ENCODE measurements at regions of chr1 and their contacts with region 1.

Region 1: DNA sequence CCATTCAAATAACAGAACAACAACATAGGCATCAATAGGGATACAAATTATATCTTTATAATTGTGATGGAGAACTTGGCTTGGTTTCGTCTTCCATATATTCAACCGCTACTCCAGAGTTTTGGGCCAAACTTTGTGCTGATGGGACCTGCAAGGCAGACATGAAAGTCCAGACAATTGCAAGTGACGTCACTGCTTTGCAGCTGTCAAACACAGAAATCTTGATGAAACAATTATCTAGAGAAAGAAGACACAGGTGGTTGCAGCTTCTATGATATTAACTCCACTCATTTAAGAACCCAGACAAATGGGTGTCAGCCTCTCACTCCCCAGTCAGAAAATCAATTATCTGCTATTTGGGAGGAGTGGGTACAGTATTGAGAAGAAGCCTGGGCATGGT is 390.6 kb downstream of the NUF2 start:
- DNase-seq: no peak
- H3K4me3 Mint-ChIP-seq: no peak overlapping the region
- H3K27ac Mint-ChIP-seq: no peak overlapping the region
- H3K4me1 Mint-ChIP-seq: no peaks in the 10 kb centered on the region
- H3K27me3 Mint-ChIP-seq: no peaks in the 10 kb centered on the region

Region 2: DNA sequence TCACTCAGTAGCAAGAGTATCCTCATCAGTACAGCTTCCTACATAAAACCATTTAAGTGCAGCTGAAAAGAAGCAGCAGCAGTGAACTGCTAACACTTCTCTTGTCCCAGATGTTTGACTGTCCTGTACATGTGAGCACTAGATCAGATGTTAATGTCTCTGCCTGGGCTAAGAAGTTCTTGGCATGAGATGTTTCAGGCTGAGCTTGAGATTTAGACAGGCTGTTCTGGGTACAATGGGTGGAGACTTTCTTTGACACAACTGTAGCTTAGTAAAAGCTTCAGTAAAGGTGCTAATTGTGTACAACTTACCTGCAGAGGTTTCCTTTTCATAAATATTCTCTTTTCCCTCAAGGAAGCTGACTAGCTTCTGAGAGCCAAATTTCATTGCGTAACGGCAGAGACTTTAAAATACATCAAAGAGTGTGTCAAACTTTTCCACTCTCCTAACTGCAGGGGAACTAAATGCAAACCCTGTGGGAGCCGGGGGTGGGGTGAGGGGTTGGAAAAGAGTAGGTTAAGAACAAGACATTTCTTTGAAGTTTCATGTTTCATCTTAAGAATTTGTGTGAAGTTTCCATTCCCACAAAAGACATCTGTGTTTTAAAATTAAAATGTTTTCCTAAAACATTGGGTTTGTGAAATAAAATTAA is 769.3 kb before region 1 on chr1:
- intact Hi-C with region 1: no loop called
- DNase-seq: no peak
- H3K4me3 Mint-ChIP-seq: no peak overlapping the region
- H3K27ac Mint-ChIP-seq: no peak overlapping the region
- H3K4me1 Mint-ChIP-seq: peaks cover 3% of the 10 kb centered on the region
- H3K27me3 Mint-ChIP-seq: peaks cover 11% of the 10 kb centered on the region

Region 3: DNA sequence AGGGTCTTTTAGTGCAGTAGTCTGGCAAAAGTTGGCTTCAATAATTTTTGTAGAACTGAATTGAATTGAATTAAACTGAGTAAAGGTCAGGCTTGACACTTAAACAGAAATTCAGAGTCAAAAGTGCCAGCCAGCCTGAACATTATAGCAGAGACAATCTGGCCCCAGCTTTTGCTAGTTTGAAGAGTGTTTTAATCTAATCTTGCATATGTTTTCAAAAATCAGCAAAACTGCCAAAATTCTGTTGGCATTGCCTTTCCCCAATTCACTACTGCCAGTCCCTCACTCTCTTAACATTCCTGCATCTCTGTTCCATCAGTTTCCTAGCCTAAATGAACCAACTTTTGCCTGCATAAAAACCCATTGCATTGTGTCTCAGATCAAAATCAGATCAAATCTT is 13.2 kb after region 1 on chr1:
- intact Hi-C with region 1: no loop called
- DNase-seq: no peak
- H3K4me3 Mint-ChIP-seq: no peak overlapping the region
- H3K27ac Mint-ChIP-seq: no peak overlapping the region
- H3K4me1 Mint-ChIP-seq: no peaks in the 10 kb centered on the region
- H3K27me3 Mint-ChIP-seq: no peaks in the 10 kb centered on the region

Region 4: GRCh38 chr1:163747261-163747660 is 34.9 kb after region 1 on chr1:
- intact Hi-C with region 1: loop called (anchors 1 kb)
- DNase-seq: no peak
- H3K4me3 Mint-ChIP-seq: no peak overlapping the region
- H3K27ac Mint-ChIP-seq: no peak overlapping the region
- H3K4me1 Mint-ChIP-seq: no peaks in the 10 kb centered on the region
- H3K27me3 Mint-ChIP-seq: no peaks in the 10 kb centered on the region

Region 5: GRCh38 chr1:163758977-163759670 is 46.8 kb after region 1 on chr1:
- intact Hi-C with region 1: no loop called
- DNase-seq: no peak
- H3K4me3 Mint-ChIP-seq: no peak overlapping the region
- H3K27ac Mint-ChIP-seq: no peak overlapping the region
- H3K4me1 Mint-ChIP-seq: no peaks in the 10 kb centered on the region
- H3K27me3 Mint-ChIP-seq: no peaks in the 10 kb centered on the region

Region 6: GRCh38 chr1:163834778-163835177 is 122.5 kb after region 1 on chr1:
- intact Hi-C with region 1: no loop called
- DNase-seq: no peak
- H3K4me3 Mint-ChIP-seq: no peak overlapping the region
- H3K27ac Mint-ChIP-seq: no peak overlapping the region
- H3K4me1 Mint-ChIP-seq: no peaks in the 10 kb centered on the region
- H3K27me3 Mint-ChIP-seq: no peaks in the 10 kb centered on the region

Measured in activated T-helper 1 cell treated with anti-CD3 and anti-CD28 coated beads, Interleukin-12 subunit alpha, Interleukin-12 subunit beta, Interleukin-2, Interleukin-4 antibody, amounts not matched to agents 30 ng/mL and 10 ng/mL and 1 ng/mL, durations not matched to agents 14 hours and 24 hours and 36 hours (primary cell).